ENCODE measurements at regions of chr17 and their contacts with region 1.

Region 1: GRCh38 chr17:7403977-7404736 is at the start of gene TMEM256:
- DNase-seq: peak; percentile 99
- H3K4me3 ChIP-seq: peak within 1 kb of the TSS; percentile 87
- H3K27ac ChIP-seq: peak within 1 kb of the TSS; percentile 61
- H3K27me3 ChIP-seq: no peaks in the 10 kb centered on the region
- CTCF ChIP-seq: 0 out of 2 replicates have a peak, but pooled peaks have one; percentile 1
- polyA plus RNA-seq, gene TMEM256: 83.8 and 104 TPM in 2 replicates

Region 2: DNA sequence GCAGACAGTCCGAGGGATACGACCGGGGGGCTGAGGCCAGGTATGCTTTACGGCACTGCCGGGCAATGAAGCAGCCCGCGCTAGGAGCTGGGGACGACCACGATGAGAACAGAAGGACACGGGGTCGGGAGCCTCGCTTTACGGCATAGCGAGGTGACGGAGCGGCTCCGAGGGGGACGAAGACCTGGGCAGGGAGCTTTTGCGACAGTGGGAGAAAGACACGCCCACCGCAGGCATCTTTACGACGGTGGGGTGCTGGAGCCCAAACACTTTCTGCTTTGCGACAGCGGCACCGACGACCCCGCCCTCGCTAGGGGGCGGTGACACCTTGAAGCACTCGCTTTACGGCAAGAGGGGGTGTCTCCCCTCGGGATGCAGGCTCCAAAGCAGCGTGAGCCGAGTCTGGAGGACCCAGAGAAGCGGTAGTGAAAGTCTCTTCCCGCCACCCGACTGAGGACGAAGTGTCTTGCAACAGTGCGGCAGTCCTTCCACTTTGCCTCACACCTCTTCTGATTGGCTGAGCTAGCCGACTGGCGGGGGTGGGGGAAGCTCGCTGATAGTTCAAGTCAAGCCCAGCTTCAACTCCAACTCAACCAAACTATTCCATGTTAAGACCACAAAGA is 74.7 kb before region 1 on chr17:
- CTCF ChIA-PET with region 1: interaction called, 4 read pairs
- POLR2A ChIA-PET with region 1: interaction called, 17 read pairs
- DNase-seq: peak; percentile 99
- H3K4me3 ChIP-seq: peak overlapping the region; percentile 97
- H3K27ac ChIP-seq: peak overlapping the region; percentile 91
- H3K27me3 ChIP-seq: peaks cover 4% of the 10 kb centered on the region
- CTCF ChIP-seq: no peak

Region 3: GRCh38 chr17:7454980-7455379 is 50.8 kb after region 1 on chr17:
- CTCF ChIA-PET with region 1: no interaction called
- POLR2A ChIA-PET with region 1: interaction called, 10 read pairs
- DNase-seq: no peak
- H3K4me3 ChIP-seq: peak overlapping the region; percentile 89
- H3K27ac ChIP-seq: no peak overlapping the region
- H3K27me3 ChIP-seq: peaks cover 2% of the 10 kb centered on the region
- CTCF ChIP-seq: no peak

Region 4: DNA sequence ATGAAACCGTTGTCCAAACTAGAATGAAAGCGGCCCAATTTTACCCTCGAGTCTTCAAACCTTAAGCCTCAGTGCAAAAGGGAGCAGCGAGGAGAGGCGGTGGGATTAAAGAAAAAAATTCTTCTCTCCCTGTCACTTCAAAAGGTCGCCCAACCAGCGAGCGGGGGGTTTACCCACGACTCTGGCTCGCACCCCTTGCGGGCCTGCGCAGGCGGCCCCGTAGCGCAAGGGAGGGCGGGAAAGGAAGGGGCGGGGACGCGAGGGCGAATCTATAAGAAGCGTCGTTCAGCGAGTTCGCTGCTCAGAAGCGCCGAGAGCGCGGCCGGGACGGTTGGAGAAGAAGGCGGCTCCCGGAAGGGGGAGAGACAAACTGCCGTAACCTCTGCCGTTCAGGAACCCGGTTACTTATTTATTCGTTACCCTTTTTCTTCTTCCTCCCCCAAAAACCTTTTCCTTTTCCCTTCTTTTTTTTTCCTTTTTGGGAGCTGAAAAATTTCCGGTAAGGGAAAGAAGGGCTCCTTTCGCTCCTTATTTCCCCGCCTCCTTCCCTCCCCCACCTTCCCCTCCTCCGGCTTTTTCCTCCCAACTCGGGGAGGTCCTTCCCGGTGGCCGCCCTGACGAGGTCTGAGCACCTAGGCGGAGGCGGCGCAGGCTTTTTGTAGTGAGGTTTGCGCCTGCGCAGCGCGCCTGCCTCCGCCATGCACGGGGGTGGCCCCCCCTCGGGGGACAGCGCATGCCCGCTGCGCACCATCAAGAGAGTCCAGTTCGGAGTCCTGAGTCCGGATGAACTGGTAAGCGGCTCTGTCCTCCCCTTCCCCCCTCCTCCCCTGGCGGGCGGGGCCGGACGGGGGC is 80.1 kb after region 1 on chr17 and contains the start of gene POLR2A:
- CTCF ChIA-PET with region 1: no interaction called
- POLR2A ChIA-PET with region 1: interaction called, 20 read pairs
- DNase-seq: peak; percentile 96
- H3K4me3 ChIP-seq: peak within 1 kb of the TSS; percentile 92
- H3K27ac ChIP-seq: peak within 1 kb of the TSS; percentile 100
- H3K27me3 ChIP-seq: no peaks in the 10 kb centered on the region
- CTCF ChIP-seq: no peak
- polyA plus RNA-seq, gene POLR2A: 18.4 and 35.0 TPM in 2 replicates

Region 5: DNA sequence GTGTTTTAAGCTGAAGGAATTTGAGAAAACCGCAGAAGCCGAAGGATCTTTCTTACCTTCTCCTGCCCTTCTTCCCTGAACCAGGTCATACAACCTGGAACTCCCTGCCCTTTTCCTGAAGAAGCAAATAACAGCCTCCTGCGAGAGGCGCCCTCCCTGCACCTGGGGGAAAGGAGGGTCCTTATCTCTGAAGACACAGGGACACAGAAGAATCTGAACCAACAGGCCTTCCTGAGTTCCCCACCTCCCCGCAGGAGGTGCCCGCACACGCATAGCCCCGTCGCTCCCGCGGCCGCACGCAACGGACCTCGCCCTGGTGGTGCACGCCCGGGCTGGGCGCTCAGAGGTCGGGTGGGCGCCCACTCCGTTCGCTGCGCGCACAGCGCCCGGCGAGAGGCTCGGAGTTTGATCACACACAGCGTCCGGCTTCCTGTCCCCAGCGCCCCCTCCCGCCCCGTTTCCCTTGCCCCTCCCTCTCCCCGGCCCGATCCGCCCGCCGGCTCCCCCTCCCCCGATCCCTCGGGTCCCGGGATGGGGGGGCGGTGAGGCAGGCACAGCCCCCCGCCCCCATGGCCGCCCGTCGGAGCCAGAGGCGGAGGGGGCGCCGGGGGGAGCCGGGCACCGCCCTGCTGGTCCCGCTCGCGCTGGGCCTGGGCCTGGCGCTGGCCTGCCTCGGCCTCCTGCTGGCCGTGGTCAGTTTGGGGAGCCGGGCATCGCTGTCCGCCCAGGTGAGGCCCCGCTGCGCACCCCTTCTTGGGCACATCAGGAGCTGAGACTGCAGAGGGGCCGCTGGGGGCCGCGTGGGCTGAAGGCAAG is 144.6 kb after region 1 on chr17 and contains the start of gene TNFSF12:
- CTCF ChIA-PET with region 1: no interaction called
- POLR2A ChIA-PET with region 1: no interaction called
- DNase-seq: no peak
- H3K4me3 ChIP-seq: peak within 1 kb of the TSS; percentile 70
- H3K27ac ChIP-seq: peak within 1 kb of the TSS; percentile 21
- H3K27me3 ChIP-seq: no peaks in the 10 kb centered on the region
- CTCF ChIP-seq: no peak
- polyA plus RNA-seq, gene TNFSF12: 26.0 and 27.1 TPM in 2 replicates

Measured in AG04450 (cell line).